Activated CD4-positive, alpha-beta memory T cell treated with anti-CD3 and anti-CD28 coated beads, Interleukin-2, amount 10 ng/mL, durations not matched to agents 7 days and 5 days (primary cell): ENCODE measurements at regions of chr2 and their contacts with region 1.

Region 1: DNA sequence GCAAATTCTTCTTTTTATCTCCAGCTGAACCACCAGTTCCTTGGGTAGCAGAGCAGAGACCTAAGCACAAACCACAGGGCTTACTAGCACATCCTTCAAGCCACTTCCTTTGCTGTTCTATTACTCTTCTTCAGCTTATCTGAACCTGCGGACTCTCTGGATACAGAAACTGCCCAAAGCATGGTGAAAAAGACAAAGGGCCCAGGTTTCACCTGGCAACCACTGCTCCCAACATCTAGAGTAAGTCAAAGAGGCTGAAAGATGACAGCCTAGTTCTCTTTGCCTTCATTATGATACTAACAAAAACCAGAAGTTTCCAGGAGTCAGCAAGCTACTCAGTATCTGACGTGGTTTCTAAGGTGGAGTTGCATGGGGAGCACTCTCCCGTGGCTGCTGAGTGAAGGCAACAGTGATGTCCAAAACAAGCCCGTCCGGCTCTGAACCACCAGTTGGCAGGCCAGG is 43.4 kb downstream of the KANSL3 start:
- DNase-seq: peak; percentile 51
- H3K4me3 Mint-ChIP-seq: peak overlapping the region; percentile 26
- H3K27ac Mint-ChIP-seq: peak overlapping the region; percentile 92
- H3K4me1 Mint-ChIP-seq: peaks cover 65% of the 10 kb centered on the region
- H3K27me3 Mint-ChIP-seq: no peaks in the 10 kb centered on the region

Region 2: GRCh38 chr2:96584017-96584416 is 10.7 kb before region 1 on chr2:
- CTCF ChIA-PET with region 1: interaction called, 4 read pairs
- POLR2A ChIA-PET with region 1: interaction called, 14 read pairs
- DNase-seq: no peak
- H3K4me3 Mint-ChIP-seq: no peak overlapping the region
- H3K27ac Mint-ChIP-seq: no peak overlapping the region
- H3K4me1 Mint-ChIP-seq: peaks cover 14% of the 10 kb centered on the region
- H3K27me3 Mint-ChIP-seq: no peaks in the 10 kb centered on the region

Region 3: GRCh38 chr2:96618604-96619283 is 24.0 kb after region 1 on chr2:
- CTCF ChIA-PET with region 1: interaction called, 6 read pairs
- POLR2A ChIA-PET with region 1: interaction called, 11 read pairs
- DNase-seq: no peak
- H3K4me3 Mint-ChIP-seq: no peak overlapping the region
- H3K27ac Mint-ChIP-seq: peak overlapping the region; percentile 7
- H3K4me1 Mint-ChIP-seq: peaks cover 49% of the 10 kb centered on the region
- H3K27me3 Mint-ChIP-seq: no peaks in the 10 kb centered on the region